Calu3 (cell line): ENCODE measurements at regions of chr1 and their contacts with region 1.

Region 1: DNA sequence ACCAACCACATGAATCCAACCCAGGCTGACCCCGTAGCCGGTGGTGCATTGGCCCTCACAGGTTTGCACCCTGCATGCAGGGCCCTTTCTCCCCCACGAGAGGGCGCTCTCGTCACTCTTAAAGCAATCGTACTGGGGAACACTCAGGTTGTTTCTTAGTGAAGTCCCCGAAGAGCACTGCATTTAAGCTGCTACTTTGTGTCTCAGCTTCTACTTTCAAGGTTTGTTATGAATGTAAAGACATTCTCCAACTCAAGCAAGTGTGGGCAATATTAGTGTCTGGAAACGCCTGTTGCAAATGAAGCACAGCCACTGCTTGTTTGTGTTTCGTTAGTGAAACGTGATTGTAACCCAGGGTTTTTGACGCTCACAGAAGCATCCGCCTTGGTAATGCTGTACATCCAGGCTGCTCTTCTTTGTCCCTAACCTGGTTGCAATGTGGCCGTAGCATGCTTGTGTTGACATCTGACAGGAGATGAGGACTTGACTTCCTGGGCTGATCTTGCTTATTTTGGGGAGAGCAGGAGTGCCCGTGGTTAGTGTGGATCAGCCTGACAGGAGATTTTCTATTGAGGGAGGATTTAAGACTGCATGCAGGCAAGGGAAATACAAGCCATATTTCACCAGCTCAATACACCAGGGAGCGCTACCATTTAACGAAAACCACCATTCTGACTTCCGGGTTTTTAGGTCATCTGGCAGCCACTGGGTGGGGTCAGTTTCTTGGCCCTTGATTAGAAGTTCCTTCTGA is 79.8 kb downstream of the ST6GALNAC3 start:
- DNase-seq: peak; percentile 81
- H3K4me3 Mint-ChIP-seq: peak overlapping the region; percentile 72
- H3K27ac Mint-ChIP-seq: peak overlapping the region; percentile 57
- H3K4me1 Mint-ChIP-seq: peaks cover 10% of the 10 kb centered on the region
- H3K27me3 Mint-ChIP-seq: no peaks in the 10 kb centered on the region
- CTCF ChIP-seq: peak; percentile 90

Region 2: GRCh38 chr1:75908717-75909152 is 245.6 kb before region 1 on chr1:
- CTCF ChIA-PET with region 1: interaction called, 7 read pairs
- intact Hi-C with region 1: loop called (anchors 2 kb)
- DNase-seq: peak; percentile 39
- H3K4me3 Mint-ChIP-seq: no peak overlapping the region
- H3K27ac Mint-ChIP-seq: no peak overlapping the region
- H3K4me1 Mint-ChIP-seq: no peaks in the 10 kb centered on the region
- H3K27me3 Mint-ChIP-seq: no peaks in the 10 kb centered on the region
- CTCF ChIP-seq: peak; percentile 23

Region 3: DNA sequence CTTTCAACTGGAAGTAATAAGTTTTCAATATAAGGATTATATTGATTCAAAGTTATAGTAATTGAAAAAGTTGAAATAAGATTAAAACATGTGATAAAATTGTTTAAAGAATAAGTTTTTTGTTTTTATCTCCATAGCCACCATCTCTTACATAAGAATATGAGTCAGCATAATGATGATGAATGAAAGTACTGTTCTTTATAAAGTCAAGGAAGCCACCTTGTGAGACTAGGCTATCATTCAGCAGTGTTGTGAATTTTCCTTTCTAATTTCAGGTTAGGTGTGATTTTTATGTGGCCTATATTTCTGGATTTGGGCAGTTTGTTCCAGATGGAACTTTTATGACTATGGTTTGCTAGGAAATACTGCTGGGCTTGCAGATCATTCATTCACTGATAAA is 199.8 kb before region 1 on chr1:
- CTCF ChIA-PET with region 1: no interaction called
- intact Hi-C with region 1: no loop called
- DNase-seq: peak; percentile 2
- H3K4me3 Mint-ChIP-seq: no peak overlapping the region
- H3K27ac Mint-ChIP-seq: peak overlapping the region; percentile 95
- H3K4me1 Mint-ChIP-seq: peaks cover 60% of the 10 kb centered on the region
- H3K27me3 Mint-ChIP-seq: no peaks in the 10 kb centered on the region
- CTCF ChIP-seq: no peak

Region 4: DNA sequence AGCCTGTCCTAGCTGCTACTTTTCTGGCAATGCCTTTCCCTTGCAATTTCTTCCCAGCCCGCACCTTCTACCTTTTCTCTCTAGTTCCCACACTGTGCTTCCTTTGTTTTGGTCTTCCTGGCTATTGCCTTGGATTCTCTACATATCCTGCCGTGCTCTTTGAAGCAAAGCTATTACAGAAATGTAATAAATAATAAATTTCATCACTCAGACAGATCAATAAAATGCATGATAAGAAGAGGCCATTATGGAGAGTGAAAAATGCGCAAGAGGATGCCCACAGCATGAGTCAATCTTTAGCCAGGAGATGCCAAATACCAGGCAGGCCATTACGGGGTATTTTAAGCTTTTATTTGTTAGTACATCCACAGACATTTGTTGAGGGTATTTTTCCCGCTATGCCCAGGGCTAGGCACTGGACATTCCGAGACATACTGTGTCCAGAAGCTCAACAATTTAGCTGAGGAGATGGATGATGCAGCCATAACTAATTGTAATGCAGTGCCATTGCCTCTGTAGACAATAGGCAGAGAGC is 83.8 kb after region 1 on chr1:
- CTCF ChIA-PET with region 1: interaction called, 6 read pairs
- intact Hi-C with region 1: loop called (anchors 5 kb)
- DNase-seq: peak; percentile 50
- H3K4me3 Mint-ChIP-seq: peak overlapping the region; percentile 25
- H3K27ac Mint-ChIP-seq: peak overlapping the region; percentile 45
- H3K4me1 Mint-ChIP-seq: peaks cover 35% of the 10 kb centered on the region
- H3K27me3 Mint-ChIP-seq: no peaks in the 10 kb centered on the region
- CTCF ChIP-seq: no peak

Region 5: DNA sequence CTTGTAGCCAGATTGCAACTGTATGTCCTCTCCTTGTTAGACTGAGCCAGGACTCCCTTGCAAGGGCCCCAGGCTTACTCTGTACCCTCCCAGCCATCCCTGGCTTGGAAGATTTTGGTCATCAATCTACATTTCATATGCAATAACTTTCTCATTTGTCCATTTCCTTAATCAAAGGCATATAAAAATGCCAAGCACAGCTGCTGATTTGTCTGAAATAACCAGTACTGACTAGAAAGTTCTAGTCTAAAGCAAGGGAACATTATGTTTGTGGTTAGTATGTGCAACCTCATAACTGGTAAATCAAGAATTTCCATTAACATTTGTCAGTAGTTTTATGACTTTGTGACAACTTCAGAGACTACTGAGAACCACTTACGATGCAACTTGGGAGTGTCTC is 290.4 kb after region 1 on chr1:
- CTCF ChIA-PET with region 1: no interaction called
- intact Hi-C with region 1: no loop called
- DNase-seq: no peak
- H3K4me3 Mint-ChIP-seq: no peak overlapping the region
- H3K27ac Mint-ChIP-seq: no peak overlapping the region
- H3K4me1 Mint-ChIP-seq: no peaks in the 10 kb centered on the region
- H3K27me3 Mint-ChIP-seq: no peaks in the 10 kb centered on the region
- CTCF ChIP-seq: no peak

Region 6: DNA sequence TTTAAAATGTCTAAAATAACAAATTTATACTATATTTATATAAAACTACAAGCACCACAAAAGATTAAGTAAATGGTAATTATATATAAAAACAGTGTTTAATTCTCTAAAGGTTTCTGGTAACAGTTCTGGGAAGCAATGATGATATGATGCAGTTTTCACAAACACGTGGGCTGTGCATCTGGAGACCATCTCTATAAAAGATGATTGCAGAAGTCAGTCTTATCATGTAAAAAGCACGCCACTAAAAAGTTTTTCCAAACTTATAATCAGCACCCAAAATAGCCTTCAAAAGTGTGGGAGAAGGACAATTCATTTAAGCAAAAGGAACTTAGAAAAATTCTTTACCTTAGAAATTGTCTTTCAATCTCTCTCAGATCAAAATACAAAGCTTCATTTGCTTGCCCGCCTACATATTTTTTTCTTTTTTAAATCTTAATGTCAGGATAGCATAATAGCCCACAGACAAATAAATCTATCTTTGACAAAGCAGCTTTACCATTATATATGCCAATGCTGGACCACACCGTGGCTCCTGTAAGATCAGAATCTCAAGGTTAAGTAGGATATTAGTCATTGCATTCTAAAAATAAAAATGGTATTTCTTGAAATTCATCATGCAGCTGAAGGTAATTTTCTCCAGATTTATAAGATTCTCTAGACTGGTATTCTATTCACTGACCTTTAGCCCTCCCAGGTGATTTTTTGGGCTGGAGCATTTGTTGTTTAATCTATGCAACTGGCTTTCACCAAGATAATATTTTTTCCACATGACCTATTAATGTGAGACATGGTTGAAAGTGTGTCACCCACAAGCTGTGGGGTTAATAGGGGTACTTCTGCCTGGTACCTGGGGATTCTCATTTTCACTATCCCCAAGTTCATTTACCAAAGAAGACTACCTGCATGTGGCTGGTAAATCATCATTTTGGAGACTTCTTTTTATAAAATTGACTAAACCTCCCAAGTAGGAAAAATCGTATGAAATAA is 523.3 kb after region 1 on chr1:
- CTCF ChIA-PET with region 1: interaction called, 3 read pairs
- intact Hi-C with region 1: loop called (anchors 10 kb)
- DNase-seq: no peak
- H3K4me3 Mint-ChIP-seq: no peak overlapping the region
- H3K27ac Mint-ChIP-seq: no peak overlapping the region
- H3K4me1 Mint-ChIP-seq: no peaks in the 10 kb centered on the region
- H3K27me3 Mint-ChIP-seq: no peaks in the 10 kb centered on the region
- CTCF ChIP-seq: no peak

Region 7: DNA sequence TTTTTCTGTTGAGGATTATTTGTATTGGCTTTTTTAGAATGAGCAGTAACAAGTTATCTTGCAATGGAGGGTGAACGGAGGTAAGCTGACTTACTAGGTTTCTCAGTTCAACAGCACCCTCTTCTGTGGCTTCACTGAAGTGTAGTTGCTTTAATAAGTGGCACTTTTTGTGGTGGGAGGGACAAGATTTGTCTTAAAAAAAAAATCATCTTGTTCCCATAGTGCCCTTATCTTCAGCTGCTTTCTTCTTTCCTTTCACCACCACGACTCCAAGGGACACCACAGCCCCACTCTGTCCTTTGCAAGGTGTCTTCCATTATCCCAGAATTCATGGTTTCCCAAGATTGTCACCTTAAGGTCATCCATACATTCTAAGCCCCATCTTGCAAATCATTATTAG is 971.9 kb after region 1 on chr1:
- CTCF ChIA-PET with region 1: no interaction called
- intact Hi-C with region 1: loop called (anchors 1 kb)
- DNase-seq: peak; percentile 39
- H3K4me3 Mint-ChIP-seq: no peak overlapping the region
- H3K27ac Mint-ChIP-seq: no peak overlapping the region
- H3K4me1 Mint-ChIP-seq: no peaks in the 10 kb centered on the region
- H3K27me3 Mint-ChIP-seq: no peaks in the 10 kb centered on the region
- CTCF ChIP-seq: peak; percentile 19

Region 8: GRCh38 chr1:77313491-77313890 is 1159.1 kb after region 1 on chr1:
- CTCF ChIA-PET with region 1: no interaction called
- intact Hi-C with region 1: loop called (anchors 10 kb)
- DNase-seq: peak; percentile 56
- H3K4me3 Mint-ChIP-seq: peak overlapping the region; percentile 4
- H3K27ac Mint-ChIP-seq: no peak overlapping the region
- H3K4me1 Mint-ChIP-seq: no peaks in the 10 kb centered on the region
- H3K27me3 Mint-ChIP-seq: no peaks in the 10 kb centered on the region
- CTCF ChIP-seq: peak; percentile 71